Pancreas (tissue), 10 donors: ENCODE measurements at regions of chr19 and their contacts with region 1.

Region 1: GRCh38 chr19:46081928-46082727 is 41.3 kb upstream of the IGFL4 start:
- DNase-seq: peak in 3 of 6 donors; percentile 22 to 60 (median 33)
- ATAC-seq: peak in 3 of 4 donors; percentile 71 to 74 (median 74)
- H3K4me3 ChIP-seq: no peak overlapping the region
- H3K27ac ChIP-seq: no peak overlapping the region
- H3K4me1 ChIP-seq: peaks cover 0 to 4% (median 0%) of the 10 kb centered on the region in 3 donors
- H3K27me3 ChIP-seq: peaks cover 0 to 10% (median 7%) of the 10 kb centered on the region in 4 donors
- CTCF ChIP-seq: peak in 3 of 4 donors; percentile 42 to 68 (median 52)

Region 2: DNA sequence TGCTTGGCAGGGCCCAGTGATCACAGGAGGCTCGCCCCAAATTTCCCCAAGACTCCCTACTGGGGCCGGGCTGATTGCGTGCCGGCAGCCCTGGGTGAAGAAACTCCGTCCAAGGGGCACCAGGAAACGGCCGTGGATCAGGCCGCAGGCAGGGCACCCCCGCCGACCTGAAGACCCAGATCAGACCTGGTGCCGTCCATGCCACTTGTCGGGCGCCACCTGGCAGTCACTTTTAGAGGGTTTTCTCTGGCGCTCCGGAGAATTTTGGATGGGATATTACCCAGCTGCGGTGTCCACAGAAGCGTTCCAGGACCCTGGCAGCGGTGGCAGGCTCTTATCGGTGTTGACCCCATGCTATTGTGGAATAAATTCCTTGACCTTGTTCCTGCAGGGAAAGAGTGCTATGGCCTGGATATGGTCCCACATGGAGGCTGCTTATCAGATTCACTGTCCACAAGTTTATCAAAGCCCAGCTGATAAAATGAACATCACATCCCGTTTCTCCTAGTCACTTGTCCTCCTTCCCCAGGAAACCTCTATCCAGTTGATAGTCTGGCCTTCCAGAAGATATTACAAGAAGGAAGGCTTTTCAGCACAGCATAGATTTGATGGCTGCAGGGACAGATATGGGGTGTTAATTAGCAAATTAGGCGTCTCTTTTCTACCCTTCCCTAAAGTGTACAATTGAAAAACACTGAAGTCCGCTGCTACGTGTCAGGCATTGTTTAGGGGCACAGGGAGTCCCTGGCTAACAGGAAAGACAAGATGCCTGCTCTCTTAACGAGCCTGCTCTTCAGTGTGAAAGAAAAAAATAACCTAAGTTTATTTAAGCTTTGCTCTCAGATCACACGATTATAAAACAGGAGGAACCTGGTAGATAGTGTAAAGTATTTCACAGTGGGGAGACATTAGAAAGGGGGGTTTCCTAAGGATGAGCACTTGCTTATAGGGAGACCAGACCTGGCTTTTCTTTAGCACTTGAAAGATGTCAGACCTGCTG is 104.3 kb after region 1 on chr19:
- intact Hi-C with region 1: loop called in 1 of 3 experiments (anchors 5 kb)
- DNase-seq: no peak
- ATAC-seq: peak in 1 of 4 donors; percentile 24
- H3K4me3 ChIP-seq: no peak overlapping the region
- H3K27ac ChIP-seq: no peak overlapping the region
- H3K4me1 ChIP-seq: no peaks in the 10 kb centered on the region
- H3K27me3 ChIP-seq: peaks cover 0 to 11% (median 0%) of the 10 kb centered on the region in 4 donors
- CTCF ChIP-seq: no peak

Region 3: DNA sequence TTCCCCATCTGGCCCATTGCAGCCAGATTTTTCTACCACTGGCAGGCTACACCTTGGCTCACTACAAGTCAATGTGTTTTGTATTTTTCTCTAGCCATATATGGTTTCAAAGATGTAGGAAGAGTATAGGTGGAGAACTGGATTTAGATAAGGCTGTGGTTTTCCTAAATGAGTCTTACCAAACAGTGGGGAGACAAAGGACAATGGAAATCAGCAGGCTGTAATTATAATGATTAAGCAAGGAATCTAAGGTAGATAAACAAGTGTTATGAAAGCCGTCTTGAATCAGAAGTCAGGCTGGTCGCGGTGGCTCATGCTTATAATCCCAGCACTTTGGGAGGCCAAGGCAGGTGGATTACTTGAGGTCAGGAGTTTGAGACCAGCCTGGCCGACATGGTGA is 158.6 kb after region 1 on chr19:
- intact Hi-C with region 1: no loop called
- DNase-seq: no peak
- ATAC-seq: no peak
- H3K4me3 ChIP-seq: no peak overlapping the region
- H3K27ac ChIP-seq: no peak overlapping the region
- H3K4me1 ChIP-seq: peaks cover 0 to 3% (median 0%) of the 10 kb centered on the region in 3 donors
- H3K27me3 ChIP-seq: no peaks in the 10 kb centered on the region
- CTCF ChIP-seq: no peak

Region 4: GRCh38 chr19:46265217-46265828 is 183.2 kb after region 1 on chr19:
- intact Hi-C with region 1: loop called in 1 of 3 experiments (anchors 10 kb)
- DNase-seq: peak in 4 of 6 donors; percentile 42 to 77 (median 46)
- ATAC-seq: peak; percentile 82 to 98 (median 95)
- H3K4me3 ChIP-seq: no peak overlapping the region
- H3K27ac ChIP-seq: no peak overlapping the region
- H3K4me1 ChIP-seq: no peaks in the 10 kb centered on the region
- H3K27me3 ChIP-seq: peaks cover 0 to 4% (median 0%) of the 10 kb centered on the region in 4 donors
- CTCF ChIP-seq: peak; percentile 73 to 90 (median 76)